Activated naive CD8-positive, alpha-beta T cell treated with anti-CD3 and anti-CD28 coated beads, Interleukin-2, amount 10 ng/mL, durations not matched to agents 7 days and 5 days (primary cell): ENCODE measurements at regions of chr12 and their contacts with region 1.

Region 1: GRCh38 chr12:111412007-111412829 is 6.5 kb downstream of the SH2B3 start:
- DNase-seq: no peak
- ATAC-seq: peak; percentile 36
- H3K4me3 Mint-ChIP-seq: peak overlapping the region; percentile 68
- H3K27ac Mint-ChIP-seq: peak overlapping the region; percentile 91
- H3K4me1 Mint-ChIP-seq: peaks cover 65% of the 10 kb centered on the region
- H3K27me3 Mint-ChIP-seq: no peaks in the 10 kb centered on the region

Region 2: GRCh38 chr12:111451649-111452129 is 39.5 kb after region 1 on chr12:
- POLR2A ChIA-PET with region 1: interaction called, 11 read pairs
- DNase-seq: no peak
- ATAC-seq: peak; percentile 30
- H3K4me3 Mint-ChIP-seq: no peak overlapping the region
- H3K27ac Mint-ChIP-seq: peak overlapping the region; percentile 15
- H3K4me1 Mint-ChIP-seq: peaks cover 36% of the 10 kb centered on the region
- H3K27me3 Mint-ChIP-seq: no peaks in the 10 kb centered on the region